Activated CD4-positive, alpha-beta T cell treated with anti-CD3 and anti-CD28 coated beads, Interleukin-2, amount 10 ng/mL, durations not matched to agents 24 days and 14 days (primary cell): ENCODE measurements at regions of chr10 and their contacts with region 1.

Region 1: DNA sequence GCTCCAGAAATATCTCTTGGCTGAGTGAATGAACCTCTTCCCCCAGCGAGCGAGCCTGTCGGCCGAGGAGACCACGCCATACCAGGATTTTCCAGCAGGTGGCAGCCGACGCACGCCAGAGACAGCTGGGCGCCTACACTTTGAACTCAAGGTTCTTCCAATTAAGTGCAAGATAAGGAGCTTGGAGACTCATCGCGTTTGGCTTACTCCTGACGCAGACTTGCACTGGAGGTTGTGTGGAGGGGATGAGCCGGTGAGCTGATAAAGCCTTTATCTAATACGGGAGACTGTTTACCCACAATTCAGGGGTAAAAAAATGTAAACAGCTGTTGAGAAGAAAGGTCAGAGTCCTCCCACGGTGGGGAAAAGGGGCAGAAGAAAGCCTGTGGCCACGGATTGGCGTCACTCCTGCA is 45.9 kb upstream of the EMX2 start:
- DNase-seq: peak; percentile 91
- H3K4me3 Mint-ChIP-seq: no peak overlapping the region
- H3K27ac Mint-ChIP-seq: no peak overlapping the region
- H3K4me1 Mint-ChIP-seq: peaks cover 2% of the 10 kb centered on the region
- H3K27me3 Mint-ChIP-seq: peaks cover 28% of the 10 kb centered on the region

Region 2: GRCh38 chr10:118241229-118242137 is 744.9 kb after region 1 on chr10:
- intact Hi-C with region 1: loop called (anchors 1 kb)
- DNase-seq: peak; percentile 89
- H3K4me3 Mint-ChIP-seq: no peak overlapping the region
- H3K27ac Mint-ChIP-seq: no peak overlapping the region
- H3K4me1 Mint-ChIP-seq: peaks cover 1% of the 10 kb centered on the region
- H3K27me3 Mint-ChIP-seq: peaks cover 41% of the 10 kb centered on the region

Region 3: DNA sequence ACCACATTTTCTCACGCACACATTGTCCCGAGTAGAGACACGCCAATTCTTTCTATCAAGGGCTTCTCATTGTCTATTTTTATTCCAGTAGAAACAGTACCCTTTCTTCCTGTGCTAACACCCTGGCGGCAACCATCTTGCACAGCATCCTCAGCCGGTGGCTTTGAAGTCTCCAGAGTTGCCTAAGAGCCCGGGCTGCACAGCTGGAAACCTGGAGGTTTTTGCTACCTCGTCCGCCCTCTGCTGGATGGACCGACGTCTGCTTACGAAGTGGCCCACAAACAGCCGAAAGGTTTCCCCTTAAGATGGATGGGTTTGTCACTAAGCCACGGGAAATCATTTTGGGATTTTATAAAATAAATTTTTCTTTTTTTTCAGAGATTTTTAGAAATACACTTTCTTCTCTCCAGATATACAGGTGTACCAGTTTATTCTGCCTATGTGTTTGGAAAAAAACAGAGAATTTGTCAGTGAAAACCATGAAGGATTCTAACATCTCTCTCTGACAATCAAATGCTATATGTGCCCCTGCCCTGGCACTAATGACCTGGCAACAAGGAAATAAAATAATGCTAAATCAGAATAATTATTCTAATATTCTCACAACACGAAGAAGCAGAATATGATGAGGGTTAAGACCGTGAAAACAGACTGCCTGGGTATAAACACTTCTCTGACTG is 927.3 kb after region 1 on chr10:
- intact Hi-C with region 1: loop called (anchors 2 kb)
- DNase-seq: peak; percentile 88
- H3K4me3 Mint-ChIP-seq: no peak overlapping the region
- H3K27ac Mint-ChIP-seq: no peak overlapping the region
- H3K4me1 Mint-ChIP-seq: peaks cover 2% of the 10 kb centered on the region
- H3K27me3 Mint-ChIP-seq: peaks cover 12% of the 10 kb centered on the region

Region 4: GRCh38 chr10:118459726-118460193 is 963.1 kb after region 1 on chr10:
- intact Hi-C with region 1: loop called (anchors 2 kb)
- DNase-seq: peak; percentile 86
- H3K4me3 Mint-ChIP-seq: no peak overlapping the region
- H3K27ac Mint-ChIP-seq: no peak overlapping the region
- H3K4me1 Mint-ChIP-seq: peaks cover 6% of the 10 kb centered on the region
- H3K27me3 Mint-ChIP-seq: peaks cover 28% of the 10 kb centered on the region